ENCODE measurements at regions of chr4 and their contacts with region 1.

Region 1: DNA sequence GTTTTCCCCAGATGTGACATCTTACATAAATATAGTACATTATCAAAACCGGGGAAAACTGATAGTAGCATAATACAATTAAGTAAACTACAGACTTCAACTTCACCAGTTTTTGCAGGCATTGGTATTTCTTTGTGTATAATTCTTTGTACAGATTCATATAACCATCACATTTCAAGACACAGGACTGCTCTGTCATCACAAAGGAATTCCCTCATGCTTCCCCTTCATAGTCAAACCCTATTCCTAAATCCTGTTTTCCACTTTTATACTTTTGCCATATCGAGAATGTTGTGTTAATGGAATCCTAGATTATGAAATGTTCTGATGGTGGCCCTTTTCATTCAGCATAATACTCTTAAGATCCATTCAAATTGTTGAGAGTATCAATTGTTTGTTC is 36.0 kb downstream of the STIM2 start:
- DNase-seq: no peak
- ATAC-seq: no peak
- H3K4me3 ChIP-seq: no peak overlapping the region
- H3K4me3 Mint-ChIP-seq: peak overlapping the region in 2 of 10 donors; percentile 1 to 15
- H3K27ac ChIP-seq: no peak overlapping the region
- H3K27ac Mint-ChIP-seq: peak overlapping the region in 3 of 9 donors; percentile 32 to 47 (median 40)
- H3K4me1 ChIP-seq: peaks cover 7 to 23% of the 10 kb centered on the region in 2 donors
- H3K4me1 Mint-ChIP-seq: peaks cover 42 to 87% (median 82%) of the 10 kb centered on the region in 7 donors
- H3K27me3 ChIP-seq: no peaks in the 10 kb centered on the region
- H3K27me3 Mint-ChIP-seq: no peaks in the 10 kb centered on the region

Region 2: GRCh38 chr4:26907731-26908599 is 11.3 kb after region 1 on chr4:
- CTCF ChIA-PET with region 1: no interaction called
- POLR2A ChIA-PET with region 1: no interaction called
- intact Hi-C with region 1: loop called in 1 of 2 experiments (anchors 1 kb)
- DNase-seq: no peak
- ATAC-seq: peak; percentile 26
- H3K4me3 ChIP-seq: no peak overlapping the region
- H3K4me3 Mint-ChIP-seq: peak overlapping the region in 7 of 10 donors; percentile 3 to 50 (median 27)
- H3K27ac ChIP-seq: no peak overlapping the region
- H3K27ac Mint-ChIP-seq: peak overlapping the region in 7 of 9 donors; percentile 6 to 80 (median 32)
- H3K4me1 ChIP-seq: peaks cover 26 to 35% of the 10 kb centered on the region in 2 donors
- H3K4me1 Mint-ChIP-seq: peaks cover 56 to 92% (median 83%) of the 10 kb centered on the region in 7 donors
- H3K27me3 ChIP-seq: no peaks in the 10 kb centered on the region
- H3K27me3 Mint-ChIP-seq: no peaks in the 10 kb centered on the region

Region 3: DNA sequence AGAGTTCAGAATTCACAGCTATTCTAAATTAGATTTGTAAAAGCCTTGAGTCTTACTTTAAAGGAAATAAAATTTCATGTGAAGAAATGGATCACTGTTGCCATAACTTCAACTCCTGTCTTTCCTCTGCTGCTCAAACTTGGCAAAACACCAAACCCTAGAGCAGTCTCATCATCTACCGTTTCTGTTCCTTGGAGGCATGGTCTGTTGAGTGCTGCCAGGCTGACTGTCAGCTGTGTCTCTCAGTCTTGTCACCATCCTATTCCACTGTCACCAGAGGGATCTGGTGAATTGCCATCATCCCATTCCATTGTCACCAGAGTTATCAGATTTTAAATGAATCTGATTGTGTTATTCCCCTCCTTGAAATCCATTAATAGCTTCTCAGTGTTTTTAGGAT is 19.6 kb after region 1 on chr4:
- CTCF ChIA-PET with region 1: interaction called, 3 read pairs
- POLR2A ChIA-PET with region 1: no interaction called
- intact Hi-C with region 1: loop called in 1 of 2 experiments (anchors 2 kb)
- DNase-seq: peak in 3 of 9 donors; percentile 5 to 18 (median 6)
- ATAC-seq: no peak
- H3K4me3 ChIP-seq: no peak overlapping the region
- H3K4me3 Mint-ChIP-seq: peak overlapping the region in 3 of 10 donors; percentile 1 to 38 (median 1)
- H3K27ac ChIP-seq: no peak overlapping the region
- H3K27ac Mint-ChIP-seq: peak overlapping the region in 7 of 9 donors; percentile 3 to 78 (median 57)
- H3K4me1 ChIP-seq: peaks cover 13 to 42% of the 10 kb centered on the region in 2 donors
- H3K4me1 Mint-ChIP-seq: peaks cover 35 to 86% (median 63%) of the 10 kb centered on the region in 7 donors
- H3K27me3 ChIP-seq: no peaks in the 10 kb centered on the region
- H3K27me3 Mint-ChIP-seq: no peaks in the 10 kb centered on the region